ENCODE measurements at regions of chr14 and their contacts with region 1.

Region 1: DNA sequence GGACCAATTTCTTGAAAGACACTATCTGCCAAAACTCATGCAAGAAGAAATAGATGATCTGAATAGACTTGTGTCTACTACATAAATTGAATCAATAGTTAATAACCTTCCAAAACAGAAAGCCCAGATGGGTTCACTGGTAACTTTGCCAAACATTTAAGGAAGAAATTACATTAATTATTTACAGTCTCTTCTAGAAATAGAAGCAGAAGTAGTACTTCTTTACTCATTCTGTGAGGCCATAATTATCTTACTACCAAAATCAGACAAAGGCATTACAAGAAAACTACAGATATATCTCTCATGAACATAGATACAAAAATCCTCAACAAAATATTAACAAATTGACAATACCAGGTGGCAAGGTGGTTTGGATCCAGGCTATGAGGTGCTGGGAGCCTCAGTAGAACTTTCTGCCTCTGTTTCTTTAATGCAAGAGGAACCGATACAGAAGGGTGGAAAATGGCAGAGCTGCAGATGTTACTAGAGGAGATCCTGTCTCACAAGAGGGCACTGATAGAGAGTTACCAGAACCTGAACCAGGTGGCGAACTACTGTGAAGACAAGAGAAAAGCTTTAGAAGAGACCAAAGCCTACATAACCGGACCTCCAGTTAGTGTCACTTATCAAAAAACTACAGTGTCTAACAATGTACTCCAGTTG is 33.7 kb upstream of the KTN1 start:
- DNase-seq: peak; percentile 33
- ATAC-seq: peak; percentile 80
- H3K4me3 ChIP-seq: no peak overlapping the region
- H3K27ac ChIP-seq: no peak overlapping the region
- H3K4me1 ChIP-seq: no peaks in the 10 kb centered on the region; the same call in 1 of the 2 replicates
- H3K27me3 ChIP-seq: no peaks in the 10 kb centered on the region
- CTCF ChIP-seq: no peak
- EP300 ChIP-seq: peak; percentile 28 to 32; a peak in 1 of 4 replicates
- POLR2A ChIP-seq: no peak
- RAD21 ChIP-seq: no peak

Region 2: GRCh38 chr14:55454264-55455002 is 91.9 kb before region 1 on chr14:
- CTCF ChIA-PET with region 1: interaction called, 3 read pairs
- POLR2A ChIA-PET with region 1: no interaction called
- RAD21 ChIA-PET with region 1: no interaction called
- SMC1A ChIA-PET with region 1: interaction called, 8 read pairs
- in situ Hi-C with region 1: no loop called
- intact Hi-C with region 1: loop called (anchors 1 kb)
- DNase-seq: no peak
- ATAC-seq: peak; percentile 19
- H3K4me3 ChIP-seq: no peak overlapping the region
- H3K27ac ChIP-seq: no peak overlapping the region
- H3K4me1 ChIP-seq: peaks cover 5% of the 10 kb centered on the region; the same call in 1 of the 2 replicates
- H3K27me3 ChIP-seq: no peaks in the 10 kb centered on the region
- CTCF ChIP-seq: no peak
- EP300 ChIP-seq: no peak
- POLR2A ChIP-seq: no peak
- RAD21 ChIP-seq: no peak

Region 3: DNA sequence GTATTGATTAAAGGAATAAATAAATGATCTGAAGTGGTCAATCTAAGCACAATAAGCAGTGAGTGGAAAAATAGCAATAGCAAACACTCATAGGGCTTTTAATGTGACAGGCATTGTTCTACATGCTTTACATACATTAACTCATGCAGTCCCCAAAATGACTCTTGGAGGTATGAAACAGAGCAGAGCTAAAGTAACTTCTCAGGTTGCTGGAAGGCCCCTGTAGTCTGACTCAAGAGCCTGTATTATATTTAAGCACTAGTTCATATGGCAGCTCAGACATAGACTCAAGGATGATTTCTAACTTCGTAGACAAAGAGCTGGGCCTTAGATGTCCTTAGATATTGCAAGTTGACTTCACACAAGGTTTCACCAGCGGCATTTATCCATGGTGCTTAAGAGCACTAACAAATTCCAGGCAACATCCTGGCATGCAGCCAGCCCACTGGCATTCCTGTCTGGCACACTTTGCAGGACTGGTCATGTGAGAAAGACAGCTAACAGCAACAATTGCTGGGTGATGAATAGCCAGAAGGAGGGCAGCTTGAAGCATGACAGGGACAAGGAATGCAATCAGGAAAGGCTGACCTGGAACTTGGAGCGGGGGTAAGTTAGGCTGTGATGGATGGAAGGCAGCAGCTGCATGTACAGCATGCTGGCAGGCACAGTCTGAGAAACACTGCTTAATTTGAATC is 10.7 kb after region 1 on chr14:
- CTCF ChIA-PET with region 1: no interaction called
- POLR2A ChIA-PET with region 1: interaction called, 8 read pairs
- RAD21 ChIA-PET with region 1: no interaction called
- SMC1A ChIA-PET with region 1: interaction called, 12 read pairs
- in situ Hi-C with region 1: no loop called
- intact Hi-C with region 1: no loop called
- DNase-seq: no peak
- ATAC-seq: no peak
- H3K4me3 ChIP-seq: no peak overlapping the region
- H3K27ac ChIP-seq: no peak overlapping the region
- H3K4me1 ChIP-seq: no peaks in the 10 kb centered on the region
- H3K27me3 ChIP-seq: no peaks in the 10 kb centered on the region
- CTCF ChIP-seq: no peak
- EP300 ChIP-seq: no peak
- POLR2A ChIP-seq: no peak
- RAD21 ChIP-seq: no peak

Region 4: GRCh38 chr14:55579724-55580469 is 33.6 kb after region 1 on chr14 and contains the start of gene KTN1:
- CTCF ChIA-PET with region 1: interaction called, 7 read pairs
- POLR2A ChIA-PET with region 1: no interaction called
- RAD21 ChIA-PET with region 1: interaction called, 4 read pairs
- SMC1A ChIA-PET with region 1: interaction called, 9 read pairs
- in situ Hi-C with region 1: no loop called
- intact Hi-C with region 1: loop called (anchors 2 kb)
- DNase-seq: no peak
- ATAC-seq: peak; percentile 86
- H3K4me3 ChIP-seq: peak within 1 kb of the TSS; percentile 91
- H3K27ac ChIP-seq: peak within 1 kb of the TSS; percentile 85
- H3K4me1 ChIP-seq: peaks cover 12% of the 10 kb centered on the region
- H3K27me3 ChIP-seq: no peaks in the 10 kb centered on the region
- CTCF ChIP-seq: no peak
- EP300 ChIP-seq: 0 out of 4 replicates have a peak, but pooled peaks of 1 of the 2 experiments have one; percentile 17
- POLR2A ChIP-seq: peak; percentile 68
- RAD21 ChIP-seq: no peak
- polyA plus RNA-seq, gene KTN1: 52.9 to 79.5 TPM

Measured in GM12878 (cell line).